ENCODE measurements at regions of chr15 and their contacts with region 1.

Region 1: DNA sequence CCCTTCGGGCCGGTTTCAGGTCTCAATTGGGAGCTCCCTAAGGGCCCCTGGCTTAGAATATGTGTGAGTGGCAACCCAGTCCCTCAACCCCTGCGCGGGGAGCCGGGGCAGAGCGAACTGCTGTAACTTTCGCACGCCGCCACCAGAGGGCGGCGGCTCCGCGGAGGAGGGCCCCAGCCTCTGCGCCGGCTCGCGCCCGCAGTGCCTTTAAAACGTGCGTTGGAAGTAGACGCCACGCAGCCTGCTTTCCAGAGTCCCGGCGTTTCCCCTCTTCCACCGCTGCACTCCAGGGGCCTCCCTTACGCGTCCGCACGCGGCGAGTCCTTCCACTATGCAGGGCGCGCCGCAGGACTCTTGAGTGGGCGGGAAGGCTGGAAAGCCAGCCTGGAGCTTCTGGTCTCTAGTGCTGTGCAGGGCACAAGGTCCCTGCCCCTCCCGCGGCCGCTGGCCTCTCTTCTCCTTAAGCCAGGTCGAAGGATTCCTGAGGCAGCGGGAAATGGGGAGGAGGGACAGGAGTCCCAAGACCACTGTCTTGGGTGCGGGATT is 23.7 kb upstream of the RNU6-1 start:
- DNase-seq: peak; percentile 12
- H3K4me3 ChIP-seq: peak overlapping the region; percentile 32 to 63 (median 47)
- H3K27ac ChIP-seq: peak overlapping the region; percentile 12 to 68 (median 30)
- H3K4me1 ChIP-seq: peaks cover 0 to 22% (median 4%) of the 10 kb centered on the region in 3 donors
- H3K27me3 ChIP-seq: no peaks in the 10 kb centered on the region
- CTCF ChIP-seq: peak; percentile 86 to 97 (median 93)
- POLR2A ChIP-seq: no peak

Region 2: GRCh38 chr15:68154923-68155559 is 291.5 kb after region 1 on chr15:
- intact Hi-C with region 1: loop called (anchors 5 kb)
- DNase-seq: no peak
- H3K4me3 ChIP-seq: no peak overlapping the region
- H3K27ac ChIP-seq: no peak overlapping the region
- H3K4me1 ChIP-seq: peaks cover 0 to 30% (median 0%) of the 10 kb centered on the region in 3 donors
- H3K27me3 ChIP-seq: no peaks in the 10 kb centered on the region
- CTCF ChIP-seq: peak; percentile 26 to 83 (median 72)
- POLR2A ChIP-seq: no peak

Region 3: GRCh38 chr15:68210821-68211655 is 347.5 kb after region 1 on chr15:
- intact Hi-C with region 1: loop called (anchors 10 kb)
- DNase-seq: no peak
- H3K4me3 ChIP-seq: peak overlapping the region in 1 of 4 donors; percentile 51
- H3K27ac ChIP-seq: no peak overlapping the region
- H3K4me1 ChIP-seq: peaks cover 3 to 19% (median 7%) of the 10 kb centered on the region in 3 donors
- H3K27me3 ChIP-seq: no peaks in the 10 kb centered on the region
- CTCF ChIP-seq: peak; percentile 39 to 77 (median 73)
- POLR2A ChIP-seq: no peak

Measured in esophagus squamous epithelium (tissue), 5 donors.